Mammary epithelial cell (primary cell): ENCODE measurements at regions of chr9 and their contacts with region 1.

Region 1: GRCh38 chr9:72364679-72365524 is at the start of gene ZFAND5:
- DNase-seq: peak; percentile 96
- H3K4me3 ChIP-seq: peak within 1 kb of the TSS; percentile 85 to 97 (median 87)
- H3K27ac ChIP-seq: peak within 1 kb of the TSS; percentile 95
- H3K4me1 ChIP-seq: peaks cover 19% of the 10 kb centered on the region
- H3K27me3 ChIP-seq: no peaks in the 10 kb centered on the region
- CTCF ChIP-seq: peak in 1 of 2 donors; percentile 32
- total RNA-seq, gene ZFAND5: 88.6 to 92.5 TPM

Region 2: GRCh38 chr9:72407114-72407513 is 42.2 kb after region 1 on chr9:
- CTCF ChIA-PET with region 1: no interaction called
- dilution Hi-C with region 1: no loop called
- in situ Hi-C with region 1: no loop called
- intact Hi-C with region 1: no loop called
- DNase-seq: no peak
- H3K4me3 ChIP-seq: no peak overlapping the region
- H3K27ac ChIP-seq: no peak overlapping the region
- H3K4me1 ChIP-seq: no peaks in the 10 kb centered on the region
- H3K27me3 ChIP-seq: no peaks in the 10 kb centered on the region
- CTCF ChIP-seq: no peak

Region 3: GRCh38 chr9:72443855-72444254 is 79.0 kb after region 1 on chr9:
- CTCF ChIA-PET with region 1: no interaction called
- dilution Hi-C with region 1: no loop called
- in situ Hi-C with region 1: no loop called
- intact Hi-C with region 1: loop called (anchors 1 kb)
- DNase-seq: peak; percentile 37
- H3K4me3 ChIP-seq: no peak overlapping the region
- H3K27ac ChIP-seq: no peak overlapping the region
- H3K4me1 ChIP-seq: peaks cover 41% of the 10 kb centered on the region
- H3K27me3 ChIP-seq: no peaks in the 10 kb centered on the region
- CTCF ChIP-seq: no peak

Region 4: GRCh38 chr9:72526901-72527800 is 162.2 kb after region 1 on chr9:
- CTCF ChIA-PET with region 1: interaction called, 8 read pairs
- dilution Hi-C with region 1: no loop called
- in situ Hi-C with region 1: no loop called
- intact Hi-C with region 1: loop called (anchors 5 kb)
- DNase-seq: peak; percentile 88
- H3K4me3 ChIP-seq: no peak overlapping the region
- H3K27ac ChIP-seq: peak overlapping the region; percentile 44
- H3K4me1 ChIP-seq: peaks cover 31% of the 10 kb centered on the region
- H3K27me3 ChIP-seq: no peaks in the 10 kb centered on the region
- CTCF ChIP-seq: no peak

Region 5: GRCh38 chr9:72577212-72577753 is 212.4 kb after region 1 on chr9:
- CTCF ChIA-PET with region 1: no interaction called
- dilution Hi-C with region 1: no loop called
- in situ Hi-C with region 1: loop called in 1 of 2 experiments (anchors 10 kb)
- intact Hi-C with region 1: no loop called
- DNase-seq: peak; percentile 93
- H3K4me3 ChIP-seq: peak overlapping the region in 1 of 3 experiments; percentile 6
- H3K27ac ChIP-seq: peak overlapping the region; percentile 66
- H3K4me1 ChIP-seq: peaks cover 52% of the 10 kb centered on the region
- H3K27me3 ChIP-seq: no peaks in the 10 kb centered on the region
- CTCF ChIP-seq: no peak

Region 6: DNA sequence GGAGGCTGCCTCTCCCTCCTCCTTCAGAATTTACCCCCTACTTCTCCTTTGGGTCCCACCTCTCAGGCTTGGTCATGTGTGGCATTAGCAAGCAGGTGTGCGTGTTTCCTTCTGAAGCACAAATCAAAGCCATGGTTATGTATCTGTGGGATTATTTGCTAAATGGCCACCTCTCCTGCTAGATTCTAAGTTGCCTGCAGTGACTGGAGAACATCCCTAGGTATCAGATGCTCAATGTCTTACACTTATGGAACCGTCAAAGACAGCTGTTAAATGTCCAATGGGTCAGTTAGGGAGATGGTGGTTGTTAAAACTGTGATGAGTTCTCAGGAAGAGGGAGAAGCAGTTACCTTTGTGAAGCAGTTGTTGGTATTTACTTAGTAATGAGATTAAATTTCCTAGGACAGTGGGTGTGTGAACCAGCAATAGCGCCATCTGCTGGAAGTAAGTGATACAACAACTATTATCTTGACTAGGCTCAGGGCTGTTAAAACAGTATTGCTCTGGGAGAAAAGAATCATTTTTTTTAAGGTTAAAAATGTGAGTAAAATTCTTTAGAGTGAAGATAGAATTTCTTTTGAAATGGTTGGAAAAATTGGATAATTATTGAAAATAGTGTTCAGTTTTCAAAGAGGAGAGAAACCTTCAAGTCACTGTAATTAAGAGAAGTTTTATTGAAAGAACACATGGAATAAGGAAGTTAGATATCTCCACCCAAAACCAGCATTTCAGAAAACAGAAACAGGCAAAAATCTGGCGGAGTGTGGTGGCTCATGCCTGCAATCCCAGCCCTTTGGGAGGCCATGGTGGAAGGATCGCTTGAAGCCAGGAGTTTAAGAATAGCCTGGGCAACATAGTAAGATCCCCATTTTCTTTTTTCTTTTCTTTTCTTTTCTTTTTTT is 227.9 kb after region 1 on chr9:
- CTCF ChIA-PET with region 1: no interaction called
- dilution Hi-C with region 1: no loop called
- in situ Hi-C with region 1: loop called in 1 of 2 experiments (anchors 5 kb)
- intact Hi-C with region 1: loop called (anchors 1 kb)
- DNase-seq: peak; percentile 46
- H3K4me3 ChIP-seq: no peak overlapping the region
- H3K27ac ChIP-seq: no peak overlapping the region
- H3K4me1 ChIP-seq: no peaks in the 10 kb centered on the region
- H3K27me3 ChIP-seq: no peaks in the 10 kb centered on the region
- CTCF ChIP-seq: peak; percentile 66 to 72

Region 7: DNA sequence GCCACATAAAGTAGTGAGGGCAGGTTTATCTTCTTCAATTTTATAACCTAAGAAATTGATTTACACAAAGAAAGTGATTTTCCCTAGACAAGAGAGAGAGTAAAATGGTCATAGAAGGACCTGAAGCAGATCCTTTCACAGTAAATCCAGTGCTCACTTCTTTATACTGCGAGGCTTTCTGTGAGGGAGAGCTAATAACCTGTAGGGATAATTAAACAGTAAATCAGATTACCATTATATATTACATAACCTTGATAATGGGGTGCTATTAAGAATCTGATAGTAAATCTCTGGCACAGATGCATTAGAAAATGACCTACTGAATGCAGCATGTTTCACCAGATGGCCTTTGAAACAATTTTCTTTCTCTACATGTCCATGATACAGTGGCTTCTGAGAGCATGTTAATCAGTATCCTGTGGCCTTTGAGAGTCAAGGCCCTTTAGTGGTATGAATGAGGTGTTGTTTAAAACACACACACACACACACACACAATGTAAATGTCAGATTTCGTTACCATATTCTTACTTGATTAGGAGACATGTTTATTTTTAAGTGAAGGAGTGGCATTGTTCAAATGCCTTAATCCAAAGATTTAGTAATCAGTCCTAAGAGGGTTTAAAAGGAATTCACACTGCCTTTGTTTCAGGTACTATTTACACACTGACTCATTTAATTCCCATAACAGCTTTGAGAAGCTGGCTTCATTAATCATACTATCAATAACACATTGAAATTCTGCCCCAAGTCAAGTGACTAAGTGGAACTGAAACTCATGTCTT is 463.2 kb after region 1 on chr9:
- CTCF ChIA-PET with region 1: no interaction called
- dilution Hi-C with region 1: no loop called
- in situ Hi-C with region 1: no loop called
- intact Hi-C with region 1: loop called (anchors 5 kb)
- DNase-seq: peak; percentile 90
- H3K4me3 ChIP-seq: no peak overlapping the region
- H3K27ac ChIP-seq: peak overlapping the region; percentile 72
- H3K4me1 ChIP-seq: peaks cover 16% of the 10 kb centered on the region
- H3K27me3 ChIP-seq: no peaks in the 10 kb centered on the region
- CTCF ChIP-seq: no peak